HEK293 (cell line): ENCODE measurements at regions of chr5 and their contacts with region 1.

Region 1: DNA sequence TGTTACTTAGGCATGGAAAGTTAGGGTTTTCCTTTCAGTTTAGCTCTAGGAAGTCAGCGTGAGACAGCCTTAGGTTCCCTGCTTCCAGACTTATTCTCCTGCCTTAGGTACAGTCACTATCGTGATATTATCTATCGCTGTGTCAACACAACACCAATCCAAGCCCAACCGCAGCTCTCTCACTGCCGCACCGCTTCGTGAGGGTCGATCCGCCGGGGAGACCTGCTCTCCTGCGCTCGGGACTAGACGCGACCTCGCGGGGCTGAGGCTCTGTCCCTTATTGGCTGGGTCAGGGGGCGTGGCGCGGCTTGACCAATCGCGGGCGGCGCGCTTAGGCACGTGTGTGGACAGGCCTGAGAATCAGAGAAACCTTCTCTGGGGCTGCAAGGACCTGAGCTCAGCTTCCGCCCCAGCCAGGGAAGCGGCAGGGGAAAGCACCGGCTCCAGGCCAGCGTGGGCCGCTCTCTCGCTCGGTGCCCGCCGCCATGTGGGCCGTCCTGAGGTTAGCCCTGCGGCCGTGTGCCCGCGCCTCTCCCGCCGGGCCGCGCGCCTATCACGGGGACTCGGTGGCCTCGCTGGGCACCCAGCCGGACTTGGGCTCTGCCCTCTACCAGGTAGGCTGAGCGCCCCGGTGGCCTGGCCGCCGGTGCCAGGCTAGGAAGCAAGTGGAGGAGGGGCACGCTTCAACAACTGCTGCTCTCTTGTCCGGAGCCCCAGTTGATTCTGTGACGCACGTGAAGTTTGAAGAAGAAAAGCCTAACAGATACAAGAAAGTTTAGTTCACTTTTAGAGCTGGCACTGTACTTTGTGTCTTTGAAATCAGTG is at the start of gene MCCC2:
- H3K4me3 ChIP-seq: peak within 1 kb of the TSS; percentile 71
- H3K27ac ChIP-seq: peak within 1 kb of the TSS; percentile 76
- H3K4me1 ChIP-seq: 0 out of 2 replicates have a peak, but pooled peaks cover 2% of the 10 kb centered on the region
- CTCF ChIP-seq: no peak; the same call in 1 of the 2 replicates

Region 2: GRCh38 chr5:71601222-71602041 is 14.3 kb after region 1 on chr5:
- CTCF ChIA-PET with region 1: interaction called, 20 read pairs
- POLR2A ChIA-PET with region 1: interaction called, 20 read pairs
- H3K4me3 ChIP-seq: no peak overlapping the region
- H3K27ac ChIP-seq: peak overlapping the region; percentile 54
- H3K4me1 ChIP-seq: peaks cover 15% of the 10 kb centered on the region
- CTCF ChIP-seq: peak; percentile 72